CD4-positive, alpha-beta T cell (primary cell): ENCODE measurements at regions of chr15 and their contacts with region 1.

Region 1: GRCh38 chr15:82005239-82005638 is 40.6 kb downstream of the MEX3B start:
- DNase-seq: no peak
- ATAC-seq: no peak
- H3K4me3 ChIP-seq: no peak overlapping the region
- H3K4me3 Mint-ChIP-seq: no peak overlapping the region
- H3K27ac ChIP-seq: no peak overlapping the region
- H3K27ac Mint-ChIP-seq: no peak overlapping the region
- H3K4me1 ChIP-seq: no peaks in the 10 kb centered on the region
- H3K4me1 Mint-ChIP-seq: no peaks in the 10 kb centered on the region
- H3K27me3 ChIP-seq: no peaks in the 10 kb centered on the region
- H3K27me3 Mint-ChIP-seq: no peaks in the 10 kb centered on the region
- CTCF ChIP-seq: no peak

Region 2: GRCh38 chr15:81992523-81992922 is 12.7 kb before region 1 on chr15:
- CTCF ChIA-PET with region 1: no interaction called
- POLR2A ChIA-PET with region 1: no interaction called
- intact Hi-C with region 1: loop called in 1 of 2 experiments (anchors 1 kb)
- DNase-seq: no peak
- ATAC-seq: no peak
- H3K4me3 ChIP-seq: no peak overlapping the region
- H3K4me3 Mint-ChIP-seq: no peak overlapping the region
- H3K27ac ChIP-seq: no peak overlapping the region
- H3K27ac Mint-ChIP-seq: no peak overlapping the region
- H3K4me1 ChIP-seq: no peaks in the 10 kb centered on the region
- H3K4me1 Mint-ChIP-seq: no peaks in the 10 kb centered on the region
- H3K27me3 ChIP-seq: peaks cover 4 to 8% of the 10 kb centered on the region in 2 experiments
- H3K27me3 Mint-ChIP-seq: peaks cover 8% of the 10 kb centered on the region
- CTCF ChIP-seq: no peak

Region 3: GRCh38 chr15:82081914-82082762 is 76.9 kb after region 1 on chr15:
- CTCF ChIA-PET with region 1: no interaction called
- POLR2A ChIA-PET with region 1: no interaction called
- intact Hi-C with region 1: no loop called
- DNase-seq: no peak
- ATAC-seq: no peak
- H3K4me3 ChIP-seq: no peak overlapping the region
- H3K4me3 Mint-ChIP-seq: no peak overlapping the region
- H3K27ac ChIP-seq: no peak overlapping the region
- H3K27ac Mint-ChIP-seq: no peak overlapping the region
- H3K4me1 ChIP-seq: no peaks in the 10 kb centered on the region
- H3K4me1 Mint-ChIP-seq: no peaks in the 10 kb centered on the region
- H3K27me3 ChIP-seq: peaks cover 3 to 9% of the 10 kb centered on the region in 2 experiments
- H3K27me3 Mint-ChIP-seq: peaks cover 13% of the 10 kb centered on the region
- CTCF ChIP-seq: no peak